Posterior cingulate gyrus (tissue), 11 donors: ENCODE measurements at regions of chr3 and their contacts with region 1.

Region 1: DNA sequence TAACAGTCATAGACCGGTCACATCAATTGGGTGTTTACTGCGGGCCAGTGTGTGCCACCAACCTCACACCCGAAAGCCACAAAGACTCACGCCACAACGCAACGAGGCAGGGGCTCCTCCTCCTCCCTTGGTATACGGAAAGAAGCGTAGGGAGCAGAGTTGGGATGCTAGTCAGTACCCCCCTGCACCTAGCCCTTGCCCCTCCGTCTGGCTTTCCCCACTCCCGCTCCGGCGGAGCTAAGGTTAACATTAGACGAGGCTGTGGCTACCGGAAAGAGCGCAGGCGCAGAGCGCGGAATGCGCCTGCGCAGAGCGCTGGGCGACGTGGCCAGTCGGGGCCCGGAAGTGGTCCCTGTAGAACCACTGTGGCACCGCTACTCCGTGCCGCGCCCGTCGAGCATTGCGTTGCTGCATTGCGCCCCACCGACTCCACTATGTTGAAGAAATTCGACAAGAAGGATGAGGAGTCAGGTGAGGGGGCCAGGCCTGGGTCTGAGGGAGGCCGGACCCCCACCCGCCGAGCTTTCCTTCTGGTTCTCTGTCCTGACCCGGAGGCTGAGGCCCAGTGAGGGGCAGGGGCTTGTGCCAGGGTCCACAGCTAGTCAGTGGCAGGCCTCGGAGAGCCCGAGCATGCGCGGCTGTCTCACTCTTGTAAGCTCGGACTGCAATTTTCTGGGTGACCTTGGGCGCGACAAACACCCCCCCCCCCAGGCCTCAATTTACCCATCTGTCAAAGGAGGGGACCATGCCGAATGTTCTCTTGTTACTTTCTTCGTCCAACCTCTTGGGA is at the start of gene COPG1:
- DNase-seq: peak; percentile 73 to 98 (median 83)

Region 2: DNA sequence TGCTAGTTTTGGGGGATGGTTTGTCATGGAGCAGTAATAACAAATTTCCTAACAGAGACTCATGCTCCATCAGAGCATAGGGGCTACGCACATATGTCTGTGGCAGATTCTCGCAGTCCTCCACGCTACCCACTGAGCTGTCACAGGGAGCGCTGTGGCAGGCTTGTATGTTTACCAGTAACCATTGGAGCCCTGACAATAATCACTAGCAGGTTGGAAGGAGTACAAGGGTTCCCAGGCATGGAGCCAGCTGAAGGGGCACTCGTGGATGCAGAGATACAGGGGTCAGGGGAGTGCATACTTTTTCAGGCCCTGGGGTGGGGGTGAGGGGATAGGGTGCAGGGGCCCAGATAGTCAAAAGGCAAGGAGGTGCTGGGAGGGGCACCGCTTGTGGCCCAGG is 196.8 kb before region 1 on chr3:
- intact Hi-C with region 1: loop called (anchors 2 kb)
- DNase-seq: peak in 1 of 10 donors; percentile 52

Region 3: DNA sequence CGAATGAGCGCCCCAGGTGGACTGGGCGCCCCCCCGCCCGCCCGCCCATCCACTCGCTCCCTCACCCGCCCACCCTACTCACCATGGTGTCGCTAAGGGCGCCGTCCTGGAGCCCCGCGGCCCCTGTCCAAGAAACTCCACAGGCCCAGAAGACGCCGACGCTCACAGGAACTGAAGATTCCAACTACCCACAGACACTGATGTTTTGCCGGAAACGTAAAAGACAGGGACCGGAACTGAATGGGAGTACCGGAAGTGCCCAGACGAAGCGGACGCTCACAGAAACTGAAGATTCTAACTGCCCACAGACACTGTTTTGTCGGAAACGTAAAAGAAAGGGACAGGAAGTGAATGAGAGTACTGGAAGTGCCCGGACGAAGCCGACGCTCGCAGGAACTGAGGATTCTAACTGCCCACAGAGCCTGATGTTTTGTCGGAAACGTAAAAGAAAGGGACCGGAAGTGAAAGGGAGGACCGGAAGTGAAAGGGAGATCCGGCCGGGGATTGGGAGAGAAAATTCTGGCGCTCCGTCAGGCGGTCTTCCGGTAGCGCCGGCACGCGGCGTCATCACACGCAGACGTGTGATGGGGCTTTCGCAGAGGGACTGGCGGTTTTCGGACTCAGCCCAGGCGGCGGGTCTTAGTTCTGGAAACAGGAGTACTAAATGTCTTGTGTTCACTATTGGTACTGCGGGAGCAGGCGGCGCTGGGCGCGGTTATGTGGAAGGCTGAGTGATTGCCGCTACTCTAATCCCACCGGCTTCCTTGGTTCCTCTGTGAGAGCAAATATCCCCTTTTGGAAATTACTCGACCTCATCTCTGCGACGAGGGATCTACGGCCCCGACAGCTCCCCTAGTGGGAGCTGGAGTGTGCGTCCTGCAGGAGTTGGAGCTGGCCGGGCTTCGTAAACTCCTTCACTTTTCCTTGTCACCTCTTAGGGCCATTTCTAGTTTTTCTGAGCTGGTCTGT is 88.3 kb before region 1 on chr3 and contains the start of gene ISY1:
- intact Hi-C with region 1: loop called (anchors 1 kb)
- DNase-seq: peak; percentile 82 to 97 (median 84)

Region 4: GRCh38 chr3:129183569-129184395 is 65.7 kb before region 1 on chr3 and contains the start of gene CNBP:
- intact Hi-C with region 1: loop called (anchors 5 kb)
- DNase-seq: peak; percentile 84 to 99 (median 92)